Activated CD4-positive, alpha-beta memory T cell treated with anti-CD3 and anti-CD28 coated beads for 36 hours (primary cell): ENCODE measurements at regions of chr13 and their contacts with region 1.

Region 1: DNA sequence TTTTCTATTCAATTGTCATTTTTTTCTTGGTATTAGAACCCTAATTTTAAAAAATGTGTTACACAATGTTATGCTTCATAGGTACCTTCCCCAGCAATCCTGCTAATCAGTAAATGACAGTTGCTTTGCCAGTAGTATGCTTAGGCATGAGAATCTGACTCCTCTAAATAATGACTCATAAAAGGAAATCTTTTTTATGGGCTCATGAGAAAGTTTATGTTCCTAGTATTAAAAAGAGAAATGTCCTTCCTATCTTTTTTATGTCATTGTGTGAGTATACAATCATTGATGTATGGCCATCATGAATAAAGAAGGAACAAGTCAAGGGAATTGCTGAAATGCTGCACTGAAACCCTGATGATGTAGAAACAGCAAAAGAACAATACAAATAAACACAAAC is 1237.7 kb upstream of the PCDH20 start:
- DNase-seq: no peak
- H3K4me3 Mint-ChIP-seq: no peak overlapping the region
- H3K27ac Mint-ChIP-seq: no peak overlapping the region
- H3K4me1 Mint-ChIP-seq: no peaks in the 10 kb centered on the region
- H3K27me3 Mint-ChIP-seq: no peaks in the 10 kb centered on the region

Region 2: DNA sequence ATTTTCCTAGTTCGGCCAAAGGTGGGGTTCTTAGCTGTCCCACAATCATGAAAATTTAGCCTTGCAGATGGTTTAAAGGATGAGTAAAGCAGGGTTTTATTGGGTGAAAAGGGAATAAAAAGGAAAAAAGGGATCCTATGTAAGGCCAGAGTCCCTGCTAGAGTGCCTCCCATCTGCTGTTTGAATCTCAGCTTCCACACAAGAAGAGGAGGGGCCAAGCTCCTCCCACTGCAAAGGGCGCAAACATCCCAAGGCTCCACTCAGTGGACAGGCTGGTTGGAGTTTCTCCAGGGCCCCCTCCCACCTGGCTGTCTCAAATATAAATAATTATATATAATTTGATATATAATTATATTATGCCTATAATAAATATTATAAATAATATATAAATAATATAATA is 34.4 kb after region 1 on chr13:
- CTCF ChIA-PET with region 1: no interaction called
- POLR2A ChIA-PET with region 1: no interaction called
- intact Hi-C with region 1: loop called (anchors 1 kb)
- DNase-seq: peak; percentile 10
- H3K4me3 Mint-ChIP-seq: no peak overlapping the region
- H3K27ac Mint-ChIP-seq: no peak overlapping the region
- H3K4me1 Mint-ChIP-seq: no peaks in the 10 kb centered on the region
- H3K27me3 Mint-ChIP-seq: no peaks in the 10 kb centered on the region

Region 3: GRCh38 chr13:62879071-62879470 is 225.7 kb after region 1 on chr13:
- CTCF ChIA-PET with region 1: no interaction called
- POLR2A ChIA-PET with region 1: no interaction called
- intact Hi-C with region 1: no loop called
- DNase-seq: no peak
- H3K4me3 Mint-ChIP-seq: no peak overlapping the region
- H3K27ac Mint-ChIP-seq: no peak overlapping the region
- H3K4me1 Mint-ChIP-seq: no peaks in the 10 kb centered on the region
- H3K27me3 Mint-ChIP-seq: no peaks in the 10 kb centered on the region